ENCODE measurements at regions of chr6 and their contacts with region 1.

Region 1: DNA sequence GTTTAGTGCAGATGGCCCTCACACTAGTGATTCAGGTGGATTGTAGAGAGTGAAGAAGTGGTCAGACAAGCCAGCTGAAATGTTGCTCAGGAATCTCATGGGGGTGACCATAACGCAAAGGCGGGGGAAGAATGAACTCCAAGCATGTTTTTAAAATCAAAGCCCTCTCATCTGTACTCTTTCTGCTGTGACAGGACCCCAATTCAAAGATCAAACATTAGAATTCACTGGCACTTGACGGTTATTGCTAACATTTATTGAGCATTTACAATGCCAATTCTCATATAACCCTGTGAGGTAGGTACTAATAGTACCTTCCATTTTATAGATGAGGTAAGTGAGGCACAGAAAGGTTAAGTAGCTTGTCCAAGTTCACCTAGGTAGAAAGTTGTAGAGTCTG is 15.7 kb downstream of the ABRACL start:
- DNase-seq: no peak
- H3K4me3 Mint-ChIP-seq: no peak overlapping the region
- H3K27ac Mint-ChIP-seq: no peak overlapping the region
- H3K4me1 Mint-ChIP-seq: peaks cover 8% of the 10 kb centered on the region
- H3K27me3 Mint-ChIP-seq: no peaks in the 10 kb centered on the region

Region 2: DNA sequence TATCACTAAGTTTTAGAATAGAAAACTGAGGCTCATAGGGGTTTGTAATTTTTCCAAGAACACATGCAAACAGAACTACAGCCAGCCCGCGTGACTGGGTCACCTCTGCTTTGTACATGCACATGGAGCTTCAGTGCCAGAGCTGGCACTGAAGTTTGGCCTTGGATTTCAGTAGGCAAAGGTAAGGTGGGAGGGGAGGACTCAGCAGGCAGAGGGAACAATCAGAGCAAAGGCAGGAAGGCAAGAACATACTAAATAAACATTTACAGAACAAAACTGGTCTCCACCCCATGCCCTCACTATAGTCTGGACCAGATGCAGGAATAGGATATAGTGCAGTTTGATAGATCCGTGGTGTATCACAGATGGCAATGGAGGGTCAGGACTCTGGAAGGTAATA is 29.3 kb before region 1 on chr6:
- CTCF ChIA-PET with region 1: interaction called, 4 read pairs
- intact Hi-C with region 1: loop called (anchors 1 kb)
- DNase-seq: no peak
- H3K4me3 Mint-ChIP-seq: no peak overlapping the region
- H3K27ac Mint-ChIP-seq: no peak overlapping the region
- H3K4me1 Mint-ChIP-seq: no peaks in the 10 kb centered on the region
- H3K27me3 Mint-ChIP-seq: no peaks in the 10 kb centered on the region